OCI-LY7 (cell line): ENCODE measurements at regions of chr4 and their contacts with region 1.

Region 1: DNA sequence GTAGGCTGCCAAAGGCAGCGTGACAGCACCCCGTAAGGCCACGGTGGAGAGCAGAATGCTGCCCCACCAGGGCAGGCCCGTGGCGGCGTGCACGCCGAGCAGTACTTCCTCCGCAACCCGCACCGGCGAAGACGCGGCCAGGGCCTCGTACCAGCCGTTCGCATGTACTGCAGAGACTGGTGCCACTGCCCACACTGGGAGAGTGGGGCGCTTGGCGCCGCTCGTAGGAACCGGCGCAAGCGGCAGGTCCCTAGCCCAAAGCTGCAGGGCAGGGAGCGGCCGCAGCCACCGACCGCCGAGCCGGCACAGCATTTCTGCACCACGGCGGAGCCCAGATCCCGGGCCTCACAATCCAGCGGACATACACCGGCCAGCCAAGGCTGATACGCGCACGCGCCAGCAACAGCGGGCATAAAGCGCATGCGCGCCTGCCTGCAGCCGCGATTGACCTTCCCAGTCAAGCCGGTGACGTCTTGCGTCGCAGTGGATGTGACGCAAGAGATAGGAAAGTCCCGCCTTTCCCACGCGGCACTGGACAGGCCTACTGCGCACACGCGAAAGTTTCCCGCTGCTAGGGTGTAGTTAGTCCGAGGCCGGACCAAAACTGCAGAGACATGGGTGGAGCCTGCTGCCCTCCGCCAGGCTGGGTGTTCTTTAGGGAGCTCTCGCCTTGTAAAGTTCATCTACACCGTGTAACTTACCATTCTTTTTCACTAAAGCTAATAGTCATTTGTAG is at the start of gene COX18:
- DNase-seq: peak; percentile 99
- H3K4me3 ChIP-seq: peak within 1 kb of the TSS; percentile 81
- H3K27ac ChIP-seq: peak within 1 kb of the TSS; percentile 93
- H3K4me1 ChIP-seq: peaks cover 15% of the 10 kb centered on the region
- CTCF ChIP-seq: 0 out of 2 replicates have a peak, but pooled peaks have one; percentile 22
- total RNA-seq, gene COX18: 14.3 and 16.9 TPM in 2 replicates

Region 2: DNA sequence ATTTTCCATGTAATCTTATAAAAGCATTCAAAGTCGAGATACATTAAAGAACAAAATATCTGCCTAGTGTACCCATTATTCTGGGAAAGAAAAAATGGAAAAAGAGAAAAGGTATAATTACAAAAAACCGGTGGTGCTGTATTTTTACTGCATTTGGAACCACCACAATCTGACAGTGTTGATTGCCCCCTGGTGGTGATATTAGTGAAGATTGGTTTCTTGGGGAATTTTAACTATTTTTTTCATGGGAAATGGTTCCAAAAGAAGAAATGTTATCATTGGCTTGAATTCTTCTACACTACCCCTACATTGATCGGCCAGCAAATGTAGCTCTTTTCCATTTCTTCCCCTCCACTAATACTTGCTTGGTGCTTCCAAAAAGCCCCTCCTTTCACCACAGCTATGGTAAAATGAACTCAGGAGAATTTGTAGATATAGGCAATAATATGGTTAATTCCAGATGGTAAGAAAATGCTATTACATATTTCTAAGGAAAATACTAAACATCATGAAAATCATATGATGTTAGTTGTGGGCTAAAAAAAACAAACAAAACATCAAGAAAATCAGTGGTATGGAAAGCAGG is 50.0 kb before region 1 on chr4:
- CTCF ChIA-PET with region 1: no interaction called
- POLR2A ChIA-PET with region 1: no interaction called
- intact Hi-C with region 1: no loop called
- DNase-seq: peak; percentile 61
- H3K4me3 ChIP-seq: no peak overlapping the region
- H3K27ac ChIP-seq: no peak overlapping the region
- H3K4me1 ChIP-seq: no peaks in the 10 kb centered on the region
- CTCF ChIP-seq: peak; percentile 91

Region 3: GRCh38 chr4:73080789-73081188 is 11.3 kb after region 1 on chr4:
- CTCF ChIA-PET with region 1: no interaction called
- POLR2A ChIA-PET with region 1: interaction called, 16 read pairs
- intact Hi-C with region 1: no loop called
- DNase-seq: no peak
- H3K4me3 ChIP-seq: no peak overlapping the region
- H3K27ac ChIP-seq: no peak overlapping the region
- H3K4me1 ChIP-seq: peaks cover 2% of the 10 kb centered on the region
- CTCF ChIP-seq: no peak

Region 4: GRCh38 chr4:73603271-73603710 is 533.8 kb after region 1 on chr4:
- CTCF ChIA-PET with region 1: no interaction called
- POLR2A ChIA-PET with region 1: no interaction called
- intact Hi-C with region 1: loop called (anchors 5 kb)
- DNase-seq: no peak
- H3K4me3 ChIP-seq: no peak overlapping the region
- H3K27ac ChIP-seq: peak overlapping the region; percentile 100
- H3K4me1 ChIP-seq: peaks cover 92% of the 10 kb centered on the region
- CTCF ChIP-seq: no peak